AG04449 (cell line): ENCODE measurements at regions of chr18 and their contacts with region 1.

Region 1: DNA sequence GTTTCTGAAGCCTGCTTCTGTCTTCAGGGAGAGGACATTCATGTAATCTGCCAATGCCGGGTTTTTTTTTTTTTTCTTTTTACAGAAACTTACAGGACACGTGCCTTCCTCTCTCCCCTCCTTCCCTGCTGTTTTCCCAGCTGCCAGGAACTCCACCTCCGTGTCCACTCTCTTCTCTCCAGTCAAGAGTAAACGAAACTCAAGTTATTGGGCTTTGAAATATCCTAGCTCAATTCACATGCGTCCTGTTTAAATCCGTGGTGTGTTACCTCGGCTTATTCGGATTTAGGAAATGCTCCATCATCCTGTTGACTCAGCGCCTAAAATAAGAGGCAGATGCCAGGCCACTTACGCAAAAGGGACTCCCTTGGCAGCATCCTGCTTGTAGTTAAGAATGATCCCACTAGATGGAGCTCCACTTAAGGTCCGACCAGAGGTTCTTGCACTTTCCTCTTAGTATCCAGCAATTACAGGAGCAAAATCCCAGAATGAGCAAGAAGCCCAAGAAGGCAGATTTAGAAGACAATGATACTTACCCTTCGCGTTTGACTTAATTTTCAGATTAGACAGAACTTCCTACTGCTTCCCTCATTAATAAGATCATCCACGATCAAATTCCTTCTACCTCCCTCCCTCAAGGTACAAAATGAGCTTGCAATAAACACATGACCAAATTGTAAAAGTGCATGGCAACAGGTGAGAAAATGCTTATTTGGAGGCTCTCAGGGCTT is 97.2 kb upstream of the ZCCHC2 start:
- DNase-seq: peak; percentile 88
- H3K4me3 ChIP-seq: peak overlapping the region; percentile 52
- CTCF ChIP-seq: peak; percentile 74

Region 2: GRCh38 chr18:62118328-62118727 is 307.3 kb before region 1 on chr18:
- CTCF ChIA-PET with region 1: no interaction called
- POLR2A ChIA-PET with region 1: no interaction called
- DNase-seq: peak; percentile 52
- H3K4me3 ChIP-seq: no peak overlapping the region
- CTCF ChIP-seq: no peak

Region 3: DNA sequence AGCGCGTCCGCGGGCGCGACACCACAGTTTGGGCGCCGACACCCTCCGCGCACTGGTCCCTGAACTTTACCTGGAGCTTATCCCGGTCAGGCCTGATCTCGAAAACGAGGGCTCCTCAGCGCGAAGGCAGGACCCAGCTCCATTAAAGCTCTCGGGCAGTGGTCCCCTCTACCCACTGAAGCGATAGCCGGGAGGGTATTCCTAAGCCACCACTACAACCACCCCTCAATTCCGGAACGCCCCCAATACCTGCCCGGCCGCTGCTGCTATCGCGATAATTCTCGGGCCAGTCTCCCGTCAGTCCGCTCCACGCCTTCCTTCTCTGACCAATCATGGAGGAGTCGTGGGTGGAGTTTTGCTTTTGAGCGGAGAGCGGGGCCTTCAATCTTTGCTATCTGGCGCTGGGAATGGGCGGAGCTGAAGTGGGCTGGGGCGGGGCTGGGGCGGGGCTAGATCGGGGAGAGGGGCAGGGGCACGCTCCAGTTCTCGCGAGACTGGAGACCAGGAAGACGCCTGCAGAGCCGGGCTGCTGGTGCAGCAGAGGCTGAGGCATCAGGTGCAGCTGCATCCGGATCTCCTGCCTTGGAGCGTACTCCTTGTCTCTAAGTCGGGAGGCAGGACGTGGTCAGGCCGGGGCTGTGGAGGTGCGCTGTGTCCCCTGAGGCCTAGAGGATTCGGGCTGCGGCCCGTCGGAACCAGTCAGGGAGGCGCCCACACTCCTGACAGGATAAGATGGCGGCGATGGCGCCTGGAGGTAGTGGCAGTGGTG is 238.7 kb before region 1 on chr18 and contains the starts of genes PIGN and RELCH:
- CTCF ChIA-PET with region 1: interaction called, 10 read pairs
- POLR2A ChIA-PET with region 1: no interaction called
- DNase-seq: peak; percentile 85
- H3K4me3 ChIP-seq: peak within 1 kb of the TSS; percentile 98
- CTCF ChIP-seq: no peak

Region 4: DNA sequence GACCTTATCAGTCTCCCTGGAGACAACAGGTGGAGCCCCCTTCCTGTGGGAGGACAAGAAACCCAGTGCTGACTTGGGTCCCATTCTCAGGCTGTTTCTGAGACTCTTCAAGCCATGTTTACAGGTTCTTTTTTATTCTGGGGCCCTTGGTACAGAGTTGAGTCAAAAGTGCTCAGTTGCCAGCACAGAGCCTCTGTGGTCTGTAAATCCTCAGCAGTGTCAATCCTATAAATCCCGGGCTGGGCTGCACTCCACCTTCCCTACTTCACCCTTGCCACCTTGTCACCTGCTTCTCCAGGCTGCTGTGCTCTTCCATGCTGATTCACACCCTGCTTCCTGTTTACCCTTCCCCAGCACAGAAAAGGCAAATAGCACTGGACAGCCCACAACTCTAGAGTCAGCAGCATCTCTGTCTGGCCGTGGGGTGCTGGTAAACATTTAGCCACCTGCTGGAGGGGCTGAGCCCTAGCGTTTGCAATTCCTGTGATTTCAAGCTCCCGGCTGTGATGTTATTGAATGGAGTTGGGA is 25.8 kb before region 1 on chr18:
- CTCF ChIA-PET with region 1: interaction called, 11 read pairs
- POLR2A ChIA-PET with region 1: no interaction called
- DNase-seq: no peak
- H3K4me3 ChIP-seq: no peak overlapping the region
- CTCF ChIP-seq: no peak

Region 5: GRCh38 chr18:62413206-62413605 is 12.4 kb before region 1 on chr18:
- CTCF ChIA-PET with region 1: interaction called, 20 read pairs
- POLR2A ChIA-PET with region 1: no interaction called
- DNase-seq: no peak
- H3K4me3 ChIP-seq: no peak overlapping the region
- CTCF ChIP-seq: no peak

Region 6: GRCh38 chr18:62445386-62445917 is 19.8 kb after region 1 on chr18:
- CTCF ChIA-PET with region 1: interaction called, 13 read pairs
- POLR2A ChIA-PET with region 1: no interaction called
- DNase-seq: no peak
- H3K4me3 ChIP-seq: no peak overlapping the region
- CTCF ChIP-seq: no peak

Region 7: DNA sequence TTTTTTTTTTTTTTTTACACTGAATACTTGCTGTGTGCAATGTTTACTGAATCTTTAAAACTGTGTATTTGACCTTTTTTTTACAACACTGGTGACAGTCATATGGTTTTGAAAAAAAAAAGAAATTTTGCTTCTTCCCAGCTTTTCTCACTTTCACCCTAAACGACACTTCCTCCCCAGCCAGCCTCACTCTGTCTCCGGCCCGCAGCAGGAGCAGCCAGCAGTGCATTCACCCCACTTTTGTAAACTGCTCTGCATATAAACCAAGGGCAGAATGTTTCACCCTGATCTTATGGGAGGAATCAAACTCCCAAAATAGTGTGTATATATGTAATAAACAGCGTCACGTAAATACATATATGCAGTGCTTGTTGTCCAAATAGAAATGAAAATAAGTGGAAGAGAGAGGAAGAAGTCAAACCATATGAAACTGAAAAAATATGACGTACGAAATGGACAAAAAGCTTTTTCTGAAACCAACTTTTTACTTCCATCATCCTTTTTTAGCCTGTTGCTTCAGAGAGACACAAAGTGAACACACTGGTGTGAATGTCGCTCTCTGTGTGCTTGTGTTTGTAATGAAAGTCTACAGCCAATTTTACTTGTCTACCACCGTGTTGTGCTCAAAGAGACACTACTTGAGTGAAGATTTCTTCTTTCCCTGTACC is 151.3 kb after region 1 on chr18:
- CTCF ChIA-PET with region 1: interaction called, 33 read pairs
- POLR2A ChIA-PET with region 1: interaction called, 3 read pairs
- DNase-seq: no peak
- H3K4me3 ChIP-seq: no peak overlapping the region
- CTCF ChIP-seq: no peak

Region 8: DNA sequence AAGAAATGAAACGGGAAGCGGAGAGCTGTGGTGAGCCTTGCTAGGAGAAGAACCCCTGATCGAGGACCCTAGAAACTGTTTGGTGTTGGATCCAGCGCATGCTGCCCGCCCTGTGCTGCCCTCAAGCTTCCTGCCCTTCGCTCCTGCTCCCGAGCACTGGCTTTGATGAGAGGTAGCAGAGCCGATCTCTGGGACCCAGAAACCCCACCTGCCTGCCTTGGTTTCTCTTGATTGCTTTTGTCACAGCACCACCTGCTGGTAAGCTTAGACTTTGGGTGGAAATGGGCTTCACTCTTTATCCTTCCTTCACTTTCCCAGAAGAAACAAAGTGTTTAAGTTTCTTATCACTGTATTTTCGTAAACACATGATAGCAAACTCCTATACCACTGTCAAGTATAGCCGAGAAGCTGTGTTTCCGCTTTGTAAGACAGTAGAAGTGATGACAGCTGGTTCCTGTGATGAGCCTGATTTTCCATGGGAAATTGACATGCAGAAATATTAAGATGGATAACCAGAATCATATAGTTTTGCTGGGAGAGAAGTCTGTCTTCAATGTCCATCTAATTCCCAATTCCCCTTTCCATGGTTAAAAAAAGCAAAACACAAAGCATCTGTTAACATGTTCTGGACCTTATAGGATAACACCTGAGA is 557.1 kb after region 1 on chr18:
- CTCF ChIA-PET with region 1: interaction called, 16 read pairs
- POLR2A ChIA-PET with region 1: no interaction called
- DNase-seq: no peak
- H3K4me3 ChIP-seq: peak overlapping the region; percentile 12; the same call in 1 of the 2 replicates
- CTCF ChIP-seq: peak; percentile 67